Transverse colon (tissue), 4 donors: ENCODE measurements at regions of chr18 and their contacts with region 1.

Region 1: DNA sequence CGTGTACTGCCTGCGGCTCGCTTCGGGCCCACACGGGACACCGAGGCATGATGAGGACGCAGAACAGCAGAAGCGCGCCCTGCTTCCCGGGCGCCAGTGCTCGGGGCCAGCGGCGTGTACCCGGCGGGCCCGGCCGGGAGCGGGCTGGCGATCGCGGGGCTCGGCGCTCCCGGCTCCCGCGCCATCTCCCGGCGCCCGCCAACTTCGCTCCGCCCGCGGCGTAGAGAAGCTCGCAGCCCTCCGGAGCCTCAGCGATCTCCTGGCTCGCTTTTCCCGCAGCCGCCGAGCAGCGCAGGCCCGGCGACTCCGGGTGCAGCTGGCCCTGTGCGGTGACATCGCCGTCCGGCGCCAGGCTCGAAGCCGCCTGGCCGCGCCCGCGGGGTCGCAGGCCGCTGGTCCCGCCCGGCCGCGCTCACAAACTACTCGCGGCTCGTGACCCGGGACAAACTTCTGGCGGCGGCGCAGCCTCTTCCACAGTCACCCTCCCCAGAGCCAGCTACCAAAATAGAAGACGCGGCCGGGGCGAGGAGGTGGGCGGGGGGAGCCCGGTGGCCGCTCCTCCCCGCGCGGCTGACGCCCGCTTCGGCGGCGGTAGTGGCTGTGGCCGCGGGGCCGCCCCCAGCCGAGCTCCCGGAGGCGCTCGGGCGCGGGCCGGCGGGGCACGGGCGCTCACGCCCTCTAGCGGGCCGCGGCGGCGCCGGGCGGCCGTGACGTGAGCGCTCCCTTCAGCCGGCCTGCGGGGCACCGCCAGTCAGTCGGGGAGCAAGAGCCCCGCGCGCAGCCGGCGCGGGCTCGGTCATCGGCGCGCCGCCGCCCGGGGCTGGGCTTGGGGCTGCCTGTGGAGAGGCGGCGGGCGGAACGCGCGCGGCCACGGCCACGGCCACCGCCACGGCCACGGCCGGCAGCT is at the start of gene PTPRM:
- DNase-seq: peak; percentile 72
- H3K4me3 ChIP-seq: peak within 1 kb of the TSS; percentile 63 to 78 (median 71)
- H3K27ac ChIP-seq: peak within 1 kb of the TSS; percentile 89 to 96 (median 94)
- H3K4me1 ChIP-seq: peaks cover 4 to 26% (median 11%) of the 10 kb centered on the region in 4 donors
- H3K27me3 ChIP-seq: peaks cover 49% of the 10 kb centered on the region
- CTCF ChIP-seq: peak in 2 of 5 experiments; percentile 11 to 20
- EP300 ChIP-seq: no peak
- POLR2A ChIP-seq: no peak
- total RNA-seq, gene PTPRM: 22.5 to 92.5 (median 39.2) TPM

Region 2: DNA sequence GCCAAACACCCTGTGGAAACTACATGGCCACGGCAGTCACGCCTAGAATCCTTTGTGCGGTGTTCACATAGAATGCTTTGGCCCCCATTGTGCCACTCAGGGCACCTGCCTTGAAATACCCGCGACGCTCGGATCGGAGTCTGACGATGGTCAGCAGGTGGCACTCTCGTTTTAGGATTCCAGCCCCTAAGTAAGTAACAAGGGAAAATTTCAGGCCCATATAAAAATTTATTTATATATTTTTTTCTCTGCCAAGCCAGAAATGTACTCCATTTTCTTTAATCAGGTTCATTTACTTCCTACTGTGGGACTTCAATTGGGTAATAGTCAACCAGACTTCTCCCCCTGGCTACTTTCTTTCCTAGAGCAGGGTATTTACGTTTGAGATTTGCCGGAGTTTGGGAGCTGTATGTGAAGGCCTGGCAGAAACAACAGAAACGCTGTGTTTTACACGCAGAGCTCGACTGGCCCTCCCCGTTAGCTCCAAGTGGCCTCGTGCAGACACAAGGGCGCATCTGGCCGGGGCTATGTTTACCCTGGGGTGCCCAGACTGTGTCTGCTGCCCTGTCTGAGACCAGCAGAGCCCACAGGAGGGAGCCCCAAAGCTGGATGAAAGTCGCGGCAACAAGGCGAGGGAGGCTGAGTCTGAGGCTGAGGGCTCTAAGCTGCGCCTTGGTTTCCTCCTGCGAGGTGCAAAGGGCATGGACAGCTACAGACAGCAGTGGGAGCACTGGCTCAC is 294.3 kb before region 1 on chr18:
- in situ Hi-C with region 1: loop called in 2 of 4 experiments (anchors 25 kb)
- intact Hi-C with region 1: loop called (anchors 5 kb)
- DNase-seq: peak; percentile 37
- H3K4me3 ChIP-seq: no peak overlapping the region
- H3K27ac ChIP-seq: peak overlapping the region; percentile 57 to 83 (median 66)
- H3K4me1 ChIP-seq: peaks cover 0 to 9% (median 0%) of the 10 kb centered on the region in 4 donors
- H3K27me3 ChIP-seq: no peaks in the 10 kb centered on the region
- CTCF ChIP-seq: peak in 3 of 5 experiments; percentile 24 to 49 (median 33)
- EP300 ChIP-seq: no peak
- POLR2A ChIP-seq: no peak

Region 3: DNA sequence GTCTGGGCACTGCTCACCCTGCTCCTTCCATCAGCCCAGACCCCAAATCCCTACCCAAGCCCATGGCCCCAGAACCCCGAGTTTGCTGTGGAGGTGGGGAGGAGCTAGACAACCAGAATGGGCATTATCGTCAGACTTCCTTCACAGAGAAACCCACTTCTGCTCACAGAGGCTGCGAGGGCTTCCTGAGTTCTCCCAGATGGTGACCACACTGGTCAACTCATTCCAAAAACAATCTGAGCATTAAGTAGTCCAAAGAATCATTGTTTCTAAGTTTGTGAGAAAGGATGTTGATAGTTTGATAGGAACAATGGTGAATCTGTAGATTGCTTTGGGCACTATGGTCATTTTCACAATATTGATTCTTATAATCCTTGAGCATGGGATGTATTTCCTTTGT is 275.8 kb before region 1 on chr18:
- in situ Hi-C with region 1: loop called in 1 of 4 experiments (anchors 25 kb)
- intact Hi-C with region 1: no loop called
- DNase-seq: no peak
- H3K4me3 ChIP-seq: no peak overlapping the region
- H3K27ac ChIP-seq: no peak overlapping the region
- H3K4me1 ChIP-seq: no peaks in the 10 kb centered on the region
- H3K27me3 ChIP-seq: no peaks in the 10 kb centered on the region
- CTCF ChIP-seq: no peak
- EP300 ChIP-seq: no peak
- POLR2A ChIP-seq: no peak

Region 4: DNA sequence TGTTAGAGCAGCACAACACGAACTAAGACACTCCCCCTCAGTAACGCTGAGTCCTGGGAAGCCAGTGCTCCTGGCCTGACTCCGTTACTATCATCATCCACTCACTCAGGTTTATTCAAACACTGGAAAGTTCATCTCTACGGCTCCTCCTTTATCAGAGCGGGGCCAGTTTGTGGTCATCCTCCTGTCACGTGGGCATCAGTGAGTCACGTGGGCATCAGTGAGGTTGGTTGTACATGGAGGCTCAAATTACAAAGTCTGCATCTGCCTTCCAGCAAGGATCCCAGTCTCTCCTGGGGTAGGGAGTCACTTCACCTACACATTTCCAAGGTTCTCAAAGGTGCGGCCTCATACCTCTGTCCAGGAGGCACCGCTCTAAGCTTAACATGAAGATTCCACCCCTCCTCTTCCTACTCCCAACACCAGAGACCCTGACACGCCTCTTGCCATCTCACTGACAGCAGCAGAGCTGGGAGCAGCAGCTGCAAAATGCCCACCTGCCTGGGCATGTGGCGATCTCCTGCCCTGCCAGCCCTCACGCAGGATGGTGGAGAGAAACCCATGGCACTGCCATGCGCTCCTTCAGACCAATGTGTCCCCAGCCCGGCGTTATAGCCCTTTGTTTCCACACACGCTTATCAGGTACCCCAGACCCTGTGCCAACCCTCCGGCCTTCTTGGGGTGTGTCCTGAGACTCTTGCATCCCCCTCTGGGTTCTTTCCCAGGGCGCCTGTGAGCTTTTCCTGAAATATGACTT is 98.9 kb before region 1 on chr18:
- in situ Hi-C with region 1: no loop called
- intact Hi-C with region 1: loop called (anchors 5 kb)
- DNase-seq: no peak
- H3K4me3 ChIP-seq: no peak overlapping the region
- H3K27ac ChIP-seq: no peak overlapping the region
- H3K4me1 ChIP-seq: no peaks in the 10 kb centered on the region
- H3K27me3 ChIP-seq: no peaks in the 10 kb centered on the region
- CTCF ChIP-seq: no peak
- EP300 ChIP-seq: no peak
- POLR2A ChIP-seq: no peak

Region 5: DNA sequence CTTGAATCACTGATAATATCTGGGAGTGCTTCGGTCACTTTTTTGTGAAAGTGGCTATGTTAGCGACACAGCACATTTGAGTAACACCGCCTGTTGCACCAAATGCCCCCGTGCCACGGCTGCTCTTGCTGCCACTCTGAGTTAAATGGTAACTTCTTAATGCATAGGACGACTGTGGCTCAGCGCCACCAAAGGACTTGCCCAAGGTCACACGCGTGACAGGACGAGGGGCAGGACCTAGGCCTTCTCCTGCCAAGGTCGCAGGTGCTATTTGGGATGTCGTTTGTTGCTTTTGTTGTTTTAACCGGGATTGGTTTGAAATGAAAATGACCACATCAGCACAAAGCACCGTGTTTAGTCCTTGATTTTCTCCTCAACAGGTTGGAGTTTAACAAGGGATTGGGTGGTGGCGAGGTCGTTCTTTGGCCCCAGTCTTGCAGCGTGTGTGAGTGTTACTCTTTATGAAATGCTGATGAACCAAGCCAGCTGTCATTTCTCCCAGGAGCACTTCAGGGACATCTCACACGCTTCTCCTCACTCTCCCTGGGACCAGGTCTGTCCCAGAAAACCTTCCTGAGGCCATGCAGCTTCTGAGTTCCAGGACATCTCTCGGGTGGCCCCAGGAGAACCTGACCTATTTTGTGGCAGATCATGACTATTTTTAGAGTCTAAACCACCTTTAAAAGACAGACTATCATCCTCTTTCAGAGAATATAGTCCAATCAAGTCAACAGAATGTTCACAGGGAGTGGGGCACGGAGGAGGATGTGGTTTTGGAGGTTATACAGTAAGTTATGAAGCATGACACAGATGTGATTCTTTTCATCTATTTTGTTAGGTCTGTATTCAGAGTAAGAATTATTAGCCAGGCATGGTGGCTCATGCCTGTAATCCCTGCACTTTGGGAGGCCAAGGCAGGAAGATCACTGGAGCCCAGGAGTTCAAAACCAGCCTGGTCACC is 1188.5 kb after region 1 on chr18:
- in situ Hi-C with region 1: no loop called
- intact Hi-C with region 1: loop called (anchors 5 kb)
- DNase-seq: peak; percentile 22
- H3K4me3 ChIP-seq: no peak overlapping the region
- H3K27ac ChIP-seq: peak overlapping the region in 1 of 4 donors; percentile 14
- H3K4me1 ChIP-seq: peaks cover 0 to 37% (median 13%) of the 10 kb centered on the region in 4 donors
- H3K27me3 ChIP-seq: peaks cover 48% of the 10 kb centered on the region
- CTCF ChIP-seq: no peak
- EP300 ChIP-seq: no peak
- POLR2A ChIP-seq: no peak